ENCODE measurements at regions of chr6 and their contacts with region 1.

Region 1: GRCh38 chr6:120774275-120774674 is 560.0 kb downstream of the TBC1D32 start:
- DNase-seq: no peak
- ATAC-seq: no peak
- H3K4me3 ChIP-seq: no peak overlapping the region
- H3K27ac ChIP-seq: no peak overlapping the region
- H3K4me1 ChIP-seq: no peaks in the 10 kb centered on the region
- H3K27me3 ChIP-seq: no peaks in the 10 kb centered on the region
- CTCF ChIP-seq: no peak

Region 2: GRCh38 chr6:121093928-121094327 is 319.7 kb after region 1 on chr6:
- intact Hi-C with region 1: loop called in 1 of 10 experiments (anchors 5 kb)
- DNase-seq: no peak
- ATAC-seq: no peak
- H3K4me3 ChIP-seq: no peak overlapping the region
- H3K27ac ChIP-seq: no peak overlapping the region
- H3K4me1 ChIP-seq: no peaks in the 10 kb centered on the region
- H3K27me3 ChIP-seq: no peaks in the 10 kb centered on the region
- CTCF ChIP-seq: no peak